Activated T-helper 1 cell treated with anti-CD3 and anti-CD28 coated beads, Interleukin-12 subunit alpha, Interleukin-12 subunit beta, Interleukin-2, Interleukin-4 antibody, amounts not matched to agents 30 ng/mL and 10 ng/mL and 1 ng/mL, durations not matched to agents 14 hours and 24 hours and 36 hours (primary cell): ENCODE measurements at regions of chr11 and their contacts with region 1.

Region 1: GRCh38 chr11:102940714-102941588 is 14.6 kb downstream of the MMP13 start:
- DNase-seq: peak; percentile 16
- H3K4me3 Mint-ChIP-seq: no peak overlapping the region
- H3K27ac Mint-ChIP-seq: no peak overlapping the region
- H3K4me1 Mint-ChIP-seq: peaks cover 15% of the 10 kb centered on the region
- H3K27me3 Mint-ChIP-seq: peaks cover 2% of the 10 kb centered on the region

Region 2: DNA sequence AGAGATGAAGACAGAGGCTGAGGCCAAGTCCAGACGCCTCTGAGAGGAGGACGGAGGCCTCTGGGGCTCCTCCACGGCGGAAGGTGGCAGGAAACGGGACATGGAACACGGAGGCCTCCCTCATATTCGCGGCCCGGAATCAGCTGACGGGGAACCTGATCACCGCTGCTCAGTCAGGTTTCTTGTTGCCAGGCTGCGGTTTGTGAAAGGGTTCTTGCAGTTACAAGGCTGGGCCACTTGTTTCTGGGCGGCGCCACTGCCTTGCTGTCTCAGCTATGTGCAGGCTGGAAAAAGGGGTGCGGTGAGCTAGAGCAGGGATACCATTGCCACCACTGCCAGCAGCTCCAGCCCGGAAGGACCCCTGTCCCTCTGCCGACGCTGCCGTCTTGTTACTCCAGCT is 133.0 kb before region 1 on chr11:
- intact Hi-C with region 1: loop called (anchors 2 kb)
- DNase-seq: no peak
- H3K4me3 Mint-ChIP-seq: no peak overlapping the region
- H3K27ac Mint-ChIP-seq: no peak overlapping the region
- H3K4me1 Mint-ChIP-seq: no peaks in the 10 kb centered on the region
- H3K27me3 Mint-ChIP-seq: peaks cover 1% of the 10 kb centered on the region

Region 3: DNA sequence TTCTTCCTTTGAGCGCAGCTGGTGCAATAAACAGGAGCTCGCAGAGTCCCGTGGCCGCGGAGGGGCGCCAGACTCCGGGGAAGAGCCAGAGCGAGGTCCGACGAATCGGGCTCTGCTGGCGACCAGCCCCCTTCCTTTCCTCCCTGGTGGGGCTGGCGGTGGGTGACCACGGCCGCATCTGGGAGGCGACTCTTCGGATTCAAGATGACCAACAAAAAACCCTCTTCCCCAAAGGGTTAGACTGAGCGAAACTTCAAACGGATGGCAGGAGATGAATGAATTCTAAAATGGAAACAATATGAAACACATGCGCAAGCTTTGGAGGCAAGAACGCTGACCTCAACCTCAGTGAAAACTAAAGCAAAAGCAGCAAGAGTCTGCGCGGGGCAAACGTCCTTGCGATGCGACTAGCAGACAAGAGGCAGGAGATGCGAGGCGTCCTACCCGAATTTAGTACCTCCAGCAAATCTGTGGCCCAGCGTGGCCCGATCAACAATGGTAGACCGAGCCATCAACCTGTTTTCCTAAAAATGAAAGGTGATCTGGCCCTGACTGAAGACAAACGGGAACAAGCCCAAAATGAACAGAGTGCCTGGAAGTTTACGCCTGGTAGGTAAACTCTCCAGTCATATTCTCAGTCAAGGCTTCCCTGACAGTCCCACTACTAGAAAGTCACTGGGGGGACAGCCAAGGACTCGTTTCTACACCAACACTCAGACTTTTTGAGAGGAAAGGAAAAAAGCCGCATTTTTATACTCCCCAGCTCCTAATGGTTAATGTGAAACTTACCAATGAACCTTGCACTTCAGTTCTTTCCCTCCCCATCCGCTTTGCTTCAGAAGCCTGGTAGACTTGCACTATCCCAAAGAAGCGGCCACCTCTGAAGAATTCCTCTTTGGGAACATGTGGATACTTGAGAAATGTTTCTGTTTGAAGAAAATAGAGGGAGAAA is 109.2 kb before region 1 on chr11:
- intact Hi-C with region 1: loop called (anchors 1 kb)
- DNase-seq: no peak
- H3K4me3 Mint-ChIP-seq: peak overlapping the region; percentile 56
- H3K27ac Mint-ChIP-seq: no peak overlapping the region
- H3K4me1 Mint-ChIP-seq: no peaks in the 10 kb centered on the region
- H3K27me3 Mint-ChIP-seq: peaks cover 23% of the 10 kb centered on the region

Region 4: GRCh38 chr11:102914238-102915043 is 26.5 kb before region 1 on chr11:
- intact Hi-C with region 1: loop called (anchors 1 kb)
- DNase-seq: no peak
- H3K4me3 Mint-ChIP-seq: no peak overlapping the region
- H3K27ac Mint-ChIP-seq: no peak overlapping the region
- H3K4me1 Mint-ChIP-seq: no peaks in the 10 kb centered on the region
- H3K27me3 Mint-ChIP-seq: peaks cover 6% of the 10 kb centered on the region